GM18951 (cell line): ENCODE measurements at regions of chr12 and their contacts with region 1.

Region 1: DNA sequence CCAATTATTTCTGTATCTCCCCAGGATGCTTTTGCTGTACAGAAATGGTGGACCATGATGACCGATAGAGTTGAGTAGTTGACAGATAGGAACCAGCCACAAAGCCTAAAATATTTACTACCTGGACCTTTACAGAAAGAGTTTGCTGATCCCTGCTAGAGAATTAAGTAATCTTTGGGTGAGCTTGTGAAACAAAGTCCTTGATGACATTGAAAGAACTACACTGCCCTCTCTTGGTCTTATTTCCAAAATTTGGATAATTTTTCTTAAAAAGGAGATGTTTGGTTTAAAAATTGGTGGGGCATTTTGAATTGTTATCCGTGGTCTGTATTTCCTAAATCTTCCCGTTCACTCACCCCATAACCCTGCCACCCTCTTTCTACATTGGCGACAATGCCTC is 13.7 kb upstream of the TCTN1 start:
- POLR2A ChIP-seq: no peak

Region 2: DNA sequence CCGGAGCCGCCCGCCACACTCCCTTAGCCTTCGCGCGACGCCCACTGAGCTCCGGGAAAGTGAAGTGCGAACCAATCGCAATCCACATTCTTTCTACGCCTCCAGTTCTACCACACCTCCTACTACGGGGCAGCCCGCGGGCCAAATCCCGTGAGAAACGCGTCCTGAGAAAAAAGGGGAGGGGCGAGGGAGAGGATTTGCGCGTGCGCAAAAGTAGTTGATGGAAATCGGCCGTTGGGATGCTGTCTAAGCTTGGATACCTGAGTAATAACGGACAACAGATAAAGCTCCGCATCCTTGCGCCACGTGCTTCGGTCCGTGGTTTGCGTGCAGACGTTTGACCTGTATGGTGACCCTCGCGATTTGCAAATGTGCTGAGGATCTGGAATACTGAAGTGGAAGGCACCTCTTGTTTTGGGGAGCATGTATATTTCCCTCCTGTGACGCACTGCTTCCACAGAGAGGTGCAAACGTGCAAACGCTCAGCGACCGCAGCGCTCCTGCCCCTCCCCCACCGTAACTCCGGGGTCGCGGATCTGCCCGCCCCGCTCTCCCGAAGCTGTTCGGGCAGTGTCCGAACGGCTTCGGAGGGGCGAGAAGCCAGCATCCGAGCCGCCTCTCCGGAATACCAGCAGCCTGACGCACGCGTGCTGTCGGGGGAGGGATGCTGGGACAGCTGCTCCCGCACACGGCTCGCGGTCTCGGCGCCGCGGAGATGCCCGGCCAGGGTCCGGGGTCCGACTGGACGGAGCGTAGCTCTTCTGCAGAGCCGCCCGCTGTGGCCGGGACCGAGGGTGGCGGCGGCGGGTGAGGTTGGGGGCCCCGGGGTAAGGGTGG is 131.8 kb before region 1 on chr12 and contains the starts of genes FAM216A and GPN3:
- in situ Hi-C with region 1: loop called (anchors 10 kb)
- POLR2A ChIP-seq: peak; percentile 78